Activated CD4-positive, alpha-beta memory T cell treated with anti-CD3 and anti-CD28 coated beads, Interleukin-2, amount 10 ng/mL, durations not matched to agents 7 days and 5 days (primary cell): ENCODE measurements at regions of chr2 and their contacts with region 1.

Region 1: GRCh38 chr2:100610381-100610831 is 47.6 kb downstream of the PDCL3 start:
- DNase-seq: peak; percentile 81
- H3K4me3 Mint-ChIP-seq: no peak overlapping the region
- H3K27ac Mint-ChIP-seq: no peak overlapping the region
- H3K4me1 Mint-ChIP-seq: peaks cover 2% of the 10 kb centered on the region
- H3K27me3 Mint-ChIP-seq: peaks cover 6% of the 10 kb centered on the region

Region 2: GRCh38 chr2:100588071-100588786 is 22.2 kb before region 1 on chr2:
- CTCF ChIA-PET with region 1: interaction called, 34 read pairs
- POLR2A ChIA-PET with region 1: no interaction called
- DNase-seq: peak; percentile 35
- H3K4me3 Mint-ChIP-seq: peak overlapping the region; percentile 25
- H3K27ac Mint-ChIP-seq: peak overlapping the region; percentile 69
- H3K4me1 Mint-ChIP-seq: peaks cover 62% of the 10 kb centered on the region
- H3K27me3 Mint-ChIP-seq: peaks cover 11% of the 10 kb centered on the region

Region 3: GRCh38 chr2:100630473-100630977 is 20.1 kb after region 1 on chr2:
- CTCF ChIA-PET with region 1: interaction called, 12 read pairs
- POLR2A ChIA-PET with region 1: no interaction called
- DNase-seq: peak; percentile 30
- H3K4me3 Mint-ChIP-seq: no peak overlapping the region
- H3K27ac Mint-ChIP-seq: peak overlapping the region; percentile 32
- H3K4me1 Mint-ChIP-seq: peaks cover 27% of the 10 kb centered on the region
- H3K27me3 Mint-ChIP-seq: peaks cover 5% of the 10 kb centered on the region

Region 4: DNA sequence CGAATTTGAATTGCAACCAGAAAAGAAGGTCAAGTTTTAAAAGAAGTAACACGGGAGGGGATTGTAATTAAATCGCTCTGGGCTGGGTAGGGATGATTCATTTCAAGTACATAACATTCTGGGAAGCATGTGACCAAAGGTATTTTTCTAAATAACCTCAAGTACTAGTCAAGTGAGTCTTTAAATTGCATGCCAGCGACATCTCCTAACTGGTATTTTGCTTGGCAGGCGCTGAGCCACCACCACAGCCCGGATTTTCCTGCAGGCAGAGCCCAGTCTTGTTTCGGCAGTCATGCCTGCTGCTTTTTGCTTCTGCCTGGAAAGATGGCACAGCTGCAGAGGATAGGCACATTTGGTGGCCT is 175.9 kb after region 1 on chr2:
- CTCF ChIA-PET with region 1: no interaction called
- POLR2A ChIA-PET with region 1: no interaction called
- DNase-seq: no peak
- H3K4me3 Mint-ChIP-seq: no peak overlapping the region
- H3K27ac Mint-ChIP-seq: no peak overlapping the region
- H3K4me1 Mint-ChIP-seq: no peaks in the 10 kb centered on the region
- H3K27me3 Mint-ChIP-seq: no peaks in the 10 kb centered on the region

Region 5: DNA sequence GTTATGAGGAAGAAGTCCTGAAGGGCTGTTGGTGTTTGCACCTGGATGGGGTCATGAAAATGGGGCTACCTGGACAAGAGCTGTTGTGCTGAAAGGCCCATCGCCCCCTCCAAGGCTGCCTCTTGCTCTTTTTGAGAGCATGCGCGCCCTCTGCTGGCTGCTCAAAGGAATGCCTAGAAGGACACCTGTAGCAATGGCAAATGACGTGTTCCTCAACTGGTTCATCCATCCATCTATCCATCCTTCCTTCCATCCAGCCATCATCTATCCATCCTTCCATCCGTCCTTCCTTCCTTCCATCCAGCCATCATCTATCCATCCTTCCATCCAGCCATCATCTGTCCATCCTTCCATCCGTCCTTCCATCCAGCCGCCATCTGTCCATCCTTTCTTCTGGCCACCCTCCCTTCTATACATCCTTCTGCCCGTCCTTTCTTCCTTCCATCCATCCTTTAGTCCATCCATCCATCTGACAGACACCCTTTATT is 374.5 kb after region 1 on chr2:
- CTCF ChIA-PET with region 1: interaction called, 55 read pairs
- POLR2A ChIA-PET with region 1: no interaction called
- DNase-seq: peak; percentile 77
- H3K4me3 Mint-ChIP-seq: no peak overlapping the region
- H3K27ac Mint-ChIP-seq: no peak overlapping the region
- H3K4me1 Mint-ChIP-seq: no peaks in the 10 kb centered on the region
- H3K27me3 Mint-ChIP-seq: peaks cover 3% of the 10 kb centered on the region